T-cell (primary cell): ENCODE measurements at regions of chr10 and their contacts with region 1.

Region 1: GRCh38 chr10:117047947-117048346 is 43.0 kb upstream of the SHTN1 start:
- DNase-seq: no peak
- ATAC-seq: no peak
- H3K4me3 ChIP-seq: no peak overlapping the region
- H3K4me3 Mint-ChIP-seq: no peak overlapping the region
- H3K27ac ChIP-seq: no peak overlapping the region
- H3K27ac Mint-ChIP-seq: no peak overlapping the region
- H3K4me1 ChIP-seq: no peaks in the 10 kb centered on the region
- H3K4me1 Mint-ChIP-seq: no peaks in the 10 kb centered on the region
- H3K27me3 ChIP-seq: no peaks in the 10 kb centered on the region
- H3K27me3 Mint-ChIP-seq: peaks cover 0 to 4% of the 10 kb centered on the region in 2 donors

Region 2: DNA sequence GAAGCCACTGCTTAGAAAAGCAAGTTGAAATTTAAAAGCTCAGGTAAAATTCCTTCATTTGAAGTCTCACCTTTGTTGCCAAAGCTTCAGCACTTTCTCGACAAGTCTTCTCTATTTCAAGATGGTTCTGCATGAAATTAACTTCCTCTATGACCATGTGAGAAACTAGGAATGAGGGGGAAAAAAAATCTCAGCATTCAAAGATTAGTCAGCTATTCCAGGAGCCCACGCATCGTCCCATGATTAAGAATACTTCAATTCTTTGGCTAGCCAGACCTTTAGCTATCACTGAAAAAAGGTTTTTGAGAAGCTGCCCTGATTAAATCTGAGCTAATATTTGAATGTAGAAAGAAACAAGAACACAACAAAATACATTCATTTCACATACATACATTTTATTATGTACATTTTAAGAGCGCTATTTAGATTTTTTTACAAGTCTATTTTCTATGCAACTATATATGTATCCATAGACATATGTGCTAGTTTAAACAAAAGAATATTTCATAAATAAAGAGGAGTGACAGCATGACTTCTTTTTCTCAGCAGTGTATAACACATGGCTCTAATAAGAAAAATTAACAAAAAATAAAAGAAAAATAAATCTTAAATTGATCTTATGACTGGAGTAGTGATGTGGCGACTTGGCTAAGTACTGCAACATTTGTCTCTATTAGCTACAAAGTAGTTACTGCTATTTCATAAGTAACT is 87.7 kb before region 1 on chr10:
- CTCF ChIA-PET with region 1: interaction called in 1 of 2 experiments, 14 read pairs
- POLR2A ChIA-PET with region 1: no interaction called
- DNase-seq: no peak
- ATAC-seq: no peak
- H3K4me3 ChIP-seq: no peak overlapping the region
- H3K4me3 Mint-ChIP-seq: no peak overlapping the region
- H3K27ac ChIP-seq: no peak overlapping the region
- H3K27ac Mint-ChIP-seq: no peak overlapping the region
- H3K4me1 ChIP-seq: no peaks in the 10 kb centered on the region
- H3K4me1 Mint-ChIP-seq: no peaks in the 10 kb centered on the region
- H3K27me3 ChIP-seq: peaks cover 0 to 2% of the 10 kb centered on the region in 2 experiments
- H3K27me3 Mint-ChIP-seq: peaks cover 0 to 3% of the 10 kb centered on the region in 2 donors

Region 3: DNA sequence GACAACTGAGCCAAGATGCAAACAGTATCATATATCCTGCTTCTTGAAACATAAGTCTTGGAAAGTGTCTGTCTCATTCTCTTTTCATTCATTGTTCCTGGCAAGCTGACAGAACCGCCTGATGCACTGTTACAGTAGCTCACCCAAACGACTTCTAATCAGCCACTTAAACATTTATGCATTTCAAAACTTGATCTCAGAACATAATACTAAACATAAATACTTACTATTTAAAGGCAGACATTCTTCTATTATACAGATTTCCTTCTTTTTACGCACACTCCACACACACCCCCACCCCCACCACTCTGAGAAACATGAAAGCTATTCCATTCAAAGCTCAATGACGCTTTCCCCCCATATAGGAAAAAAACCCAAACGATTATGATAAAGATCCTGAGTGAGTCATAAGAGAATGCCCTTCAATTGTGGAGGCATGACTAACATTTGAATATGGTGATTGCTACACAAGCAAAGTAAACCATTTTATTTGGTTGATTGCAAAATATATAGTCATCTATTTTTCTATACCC is 73.4 kb before region 1 on chr10:
- CTCF ChIA-PET with region 1: no interaction called
- POLR2A ChIA-PET with region 1: no interaction called
- DNase-seq: no peak
- ATAC-seq: no peak
- H3K4me3 ChIP-seq: no peak overlapping the region
- H3K4me3 Mint-ChIP-seq: no peak overlapping the region
- H3K27ac ChIP-seq: no peak overlapping the region
- H3K27ac Mint-ChIP-seq: no peak overlapping the region
- H3K4me1 ChIP-seq: no peaks in the 10 kb centered on the region
- H3K4me1 Mint-ChIP-seq: no peaks in the 10 kb centered on the region
- H3K27me3 ChIP-seq: no peaks in the 10 kb centered on the region
- H3K27me3 Mint-ChIP-seq: peaks cover 5 to 11% of the 10 kb centered on the region in 2 donors